PC-3 (cell line): ENCODE measurements at regions of chr6 and their contacts with region 1.

Region 1: DNA sequence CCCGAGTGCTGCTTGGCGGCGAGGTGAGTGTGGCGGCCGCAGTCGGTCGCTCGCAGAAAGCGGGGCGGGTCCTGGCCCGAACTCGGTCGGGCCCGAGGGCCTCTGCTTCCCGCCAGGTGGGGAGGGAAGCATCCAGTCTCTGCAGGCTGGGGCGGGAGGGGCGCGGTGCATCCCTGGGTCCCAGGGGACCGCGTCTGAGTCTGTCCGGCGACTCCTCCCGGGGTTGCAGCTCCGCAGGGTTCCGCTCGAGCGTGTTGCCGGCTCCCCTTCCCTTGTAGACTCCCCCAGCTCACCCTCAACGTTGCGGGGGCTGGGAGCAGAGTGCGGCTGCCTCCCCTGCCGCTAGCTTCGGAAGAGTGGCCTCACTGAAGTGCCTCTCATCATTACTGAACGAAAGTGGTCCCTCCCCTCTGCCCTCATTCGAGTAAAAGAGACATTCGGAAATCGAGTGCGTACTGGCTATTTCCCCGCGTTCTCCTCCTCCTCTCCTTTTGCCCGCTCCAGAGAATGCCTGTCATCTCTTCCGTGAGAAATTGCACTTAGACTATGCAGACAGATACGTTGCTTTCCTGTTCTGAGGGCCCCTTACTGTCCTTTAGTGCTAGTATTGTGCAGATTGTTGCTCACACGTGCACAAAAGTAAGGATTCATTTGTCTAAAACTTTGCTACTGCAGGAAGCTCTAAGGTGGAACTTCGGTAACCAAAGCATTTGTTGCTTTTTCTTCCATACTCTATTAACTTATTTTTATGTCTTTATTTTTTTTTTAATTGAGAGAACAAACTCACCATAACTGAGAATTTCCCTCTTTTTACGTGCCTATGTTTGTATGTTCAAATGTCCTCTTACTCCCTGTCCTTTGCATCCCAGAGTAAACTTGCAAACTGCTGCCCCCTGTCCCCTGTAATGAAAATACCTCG is 751 bp downstream of the MAP3K4 start:
- DNase-seq: peak; percentile 63
- ATAC-seq: peak; percentile 44
- H3K4me3 ChIP-seq: peak overlapping the region; percentile 88
- H3K27ac ChIP-seq: peak overlapping the region; percentile 82
- H3K4me1 ChIP-seq: peaks cover 18% of the 10 kb centered on the region
- H3K27me3 ChIP-seq: no peaks in the 10 kb centered on the region
- CTCF ChIP-seq: peak; percentile 73

Region 2: GRCh38 chr6:160750276-160750689 is 242.0 kb before region 1 on chr6:
- CTCF ChIA-PET with region 1: interaction called, 3 read pairs
- POLR2A ChIA-PET with region 1: no interaction called
- intact Hi-C with region 1: loop called (anchors 2 kb)
- DNase-seq: peak; percentile 58
- ATAC-seq: peak; percentile 76
- H3K4me3 ChIP-seq: no peak overlapping the region
- H3K27ac ChIP-seq: 0 out of 2 replicates have a peak overlapping the region, but pooled peaks have one; percentile 16
- H3K4me1 ChIP-seq: no peaks in the 10 kb centered on the region; the same call in 1 of the 2 replicates
- H3K27me3 ChIP-seq: no peaks in the 10 kb centered on the region
- CTCF ChIP-seq: peak; percentile 91

Region 3: GRCh38 chr6:160930547-160931377 is 61.6 kb before region 1 on chr6:
- CTCF ChIA-PET with region 1: no interaction called
- POLR2A ChIA-PET with region 1: no interaction called
- intact Hi-C with region 1: loop called (anchors 1 kb)
- DNase-seq: peak; percentile 74
- ATAC-seq: peak; percentile 90
- H3K4me3 ChIP-seq: peak overlapping the region; percentile 75
- H3K27ac ChIP-seq: peak overlapping the region; percentile 48
- H3K4me1 ChIP-seq: peaks cover 12% of the 10 kb centered on the region
- H3K27me3 ChIP-seq: no peaks in the 10 kb centered on the region
- CTCF ChIP-seq: peak; percentile 78

Region 4: DNA sequence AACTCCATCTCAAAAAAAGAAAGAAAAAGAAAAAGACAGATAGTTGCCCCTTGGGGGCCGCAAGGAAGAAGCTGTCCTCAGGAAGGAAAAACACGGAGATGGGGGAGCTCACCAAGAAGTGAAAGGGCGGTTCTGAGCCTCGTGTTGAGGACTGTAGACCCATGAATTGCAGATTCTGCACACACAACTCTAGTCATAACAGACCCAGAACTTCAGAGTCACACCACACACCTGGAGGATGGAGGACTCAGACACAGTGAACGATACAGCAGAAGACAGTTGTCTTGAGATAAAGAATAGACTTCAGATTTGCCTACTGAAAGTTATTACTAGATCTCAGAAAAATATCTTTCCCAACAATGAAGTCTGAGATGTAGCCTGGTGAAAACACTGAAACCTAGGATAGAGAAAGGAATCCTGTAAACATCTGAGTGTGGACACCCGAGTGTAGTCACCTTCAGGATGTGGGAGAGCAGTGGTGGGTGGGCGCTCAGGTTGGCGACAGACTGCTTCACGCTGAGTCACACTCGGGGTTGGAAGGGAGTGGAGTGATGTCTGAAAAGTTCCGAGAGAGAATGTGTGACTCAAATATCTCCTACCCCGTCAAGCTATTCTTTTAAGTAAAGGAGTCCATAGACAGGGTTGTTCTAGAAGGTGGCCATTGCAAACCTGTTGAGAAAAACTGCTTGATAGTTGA is 87.4 kb after region 1 on chr6:
- CTCF ChIA-PET with region 1: no interaction called
- POLR2A ChIA-PET with region 1: no interaction called
- intact Hi-C with region 1: loop called (anchors 10 kb)
- DNase-seq: peak; percentile 73
- ATAC-seq: peak; percentile 94
- H3K4me3 ChIP-seq: no peak overlapping the region
- H3K27ac ChIP-seq: peak overlapping the region; percentile 76
- H3K4me1 ChIP-seq: peaks cover 11% of the 10 kb centered on the region
- H3K27me3 ChIP-seq: no peaks in the 10 kb centered on the region
- CTCF ChIP-seq: no peak

Region 5: DNA sequence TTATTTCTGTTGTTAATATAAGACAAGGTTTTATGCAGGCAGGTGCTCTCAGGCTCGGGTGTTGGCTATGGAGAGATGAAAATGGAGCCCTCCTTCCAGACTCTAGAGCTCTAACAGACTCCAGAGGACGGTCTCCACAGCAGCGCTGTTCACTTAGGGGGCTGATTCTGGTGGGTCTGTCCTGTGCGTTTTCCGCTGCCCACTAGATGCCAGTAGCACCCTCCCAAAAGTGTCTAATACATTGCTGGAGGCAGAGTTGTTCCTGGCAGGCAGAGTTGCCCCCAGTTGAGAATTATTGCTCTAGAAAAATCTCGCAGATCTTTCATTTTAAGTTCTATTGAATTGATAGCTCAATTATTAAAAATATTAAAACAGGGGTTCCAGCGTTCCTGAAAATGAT is 109.2 kb after region 1 on chr6:
- CTCF ChIA-PET with region 1: no interaction called
- POLR2A ChIA-PET with region 1: no interaction called
- intact Hi-C with region 1: no loop called
- DNase-seq: no peak
- ATAC-seq: no peak
- H3K4me3 ChIP-seq: no peak overlapping the region
- H3K27ac ChIP-seq: no peak overlapping the region
- H3K4me1 ChIP-seq: peaks cover 20% of the 10 kb centered on the region
- H3K27me3 ChIP-seq: no peaks in the 10 kb centered on the region
- CTCF ChIP-seq: peak; percentile 37

Region 6: GRCh38 chr6:161273752-161274487 is 281.6 kb after region 1 on chr6 and contains the start of gene AGPAT4:
- CTCF ChIA-PET with region 1: no interaction called
- POLR2A ChIA-PET with region 1: no interaction called
- intact Hi-C with region 1: loop called (anchors 10 kb)
- DNase-seq: peak; percentile 89
- ATAC-seq: peak; percentile 88
- H3K4me3 ChIP-seq: peak within 1 kb of the TSS; percentile 85
- H3K27ac ChIP-seq: peak within 1 kb of the TSS; percentile 66
- H3K4me1 ChIP-seq: peaks cover 29% of the 10 kb centered on the region
- H3K27me3 ChIP-seq: no peaks in the 10 kb centered on the region
- CTCF ChIP-seq: no peak
- total RNA-seq, gene AGPAT4: 3.8 and 3.9 TPM in 2 replicates